HCT116 (cell line): ENCODE measurements at regions of chr11 and their contacts with region 1.

Region 1: GRCh38 chr11:123062158-123062891 is 389 bp upstream of the HSPA8 start:
- DNase-seq: peak; percentile 97
- ATAC-seq: peak; percentile 87
- H3K4me3 ChIP-seq: peak overlapping the region; percentile 62 to 97
- H3K27ac ChIP-seq: peak overlapping the region; percentile 98
- H3K4me1 ChIP-seq: peaks cover 18 to 28% of the 10 kb centered on the region in 2 experiments
- H3K27me3 ChIP-seq: no peaks in the 10 kb centered on the region
- CTCF ChIP-seq: no peak
- POLR2A ChIP-seq: no peak
- RAD21 ChIP-seq: no peak

Region 2: GRCh38 chr11:123080015-123080414 is 17.7 kb after region 1 on chr11:
- CTCF ChIA-PET with region 1: no interaction called
- POLR2A ChIA-PET with region 1: interaction called, 13 read pairs
- RAD21 ChIA-PET with region 1: no interaction called
- intact Hi-C with region 1: no loop called
- DNase-seq: no peak
- ATAC-seq: no peak
- H3K4me3 ChIP-seq: no peak overlapping the region
- H3K27ac ChIP-seq: no peak overlapping the region
- H3K4me1 ChIP-seq: peaks cover 7 to 12% of the 10 kb centered on the region in 2 experiments; a peak in 3 of 4 replicates
- H3K27me3 ChIP-seq: no peaks in the 10 kb centered on the region
- CTCF ChIP-seq: no peak
- POLR2A ChIP-seq: no peak
- RAD21 ChIP-seq: no peak

Region 3: DNA sequence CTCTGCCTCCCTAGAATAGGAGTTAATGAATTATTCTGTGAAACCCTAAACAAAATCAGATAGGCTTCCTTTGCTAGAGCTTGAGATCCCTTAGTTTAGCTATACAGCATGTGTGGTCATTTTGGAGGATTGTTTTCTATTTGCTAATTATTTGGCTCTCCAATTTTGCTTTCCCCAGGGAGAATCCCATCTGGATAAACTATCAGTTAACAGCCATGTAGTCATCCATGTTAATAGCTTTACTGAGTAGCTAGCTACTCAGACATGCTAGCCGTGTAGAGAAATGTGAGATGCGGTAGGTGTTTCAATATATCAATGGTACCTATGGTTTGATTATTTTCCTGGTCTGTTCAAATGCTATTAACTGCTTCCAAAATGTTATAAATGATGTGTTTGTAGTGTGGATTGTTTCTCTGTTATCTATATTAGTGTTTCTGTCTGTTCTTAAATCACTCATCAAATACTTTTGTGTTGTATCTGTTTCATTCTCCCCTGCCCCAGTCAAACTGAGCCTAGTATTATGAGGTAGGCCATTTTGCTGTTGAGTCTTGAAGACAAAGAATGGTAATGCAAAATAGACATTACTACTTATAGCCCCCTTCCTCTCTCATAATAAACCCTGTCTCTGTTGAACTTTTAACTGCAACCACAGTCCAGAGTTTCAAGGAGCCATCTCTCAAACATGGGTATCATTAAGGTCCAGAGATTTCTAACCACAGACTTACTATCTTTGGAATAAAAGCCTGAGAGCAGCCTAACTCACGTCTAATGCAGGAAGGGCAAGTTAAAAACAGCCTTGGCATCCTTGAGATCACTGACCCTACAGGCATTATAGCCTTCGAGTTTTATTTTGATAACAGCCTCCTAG is 311.7 kb after region 1 on chr11:
- CTCF ChIA-PET with region 1: no interaction called
- POLR2A ChIA-PET with region 1: no interaction called
- RAD21 ChIA-PET with region 1: no interaction called
- intact Hi-C with region 1: no loop called
- DNase-seq: no peak
- ATAC-seq: no peak
- H3K4me3 ChIP-seq: no peak overlapping the region
- H3K27ac ChIP-seq: no peak overlapping the region
- H3K4me1 ChIP-seq: no peaks in the 10 kb centered on the region
- H3K27me3 ChIP-seq: peaks cover 37% of the 10 kb centered on the region
- CTCF ChIP-seq: no peak
- POLR2A ChIP-seq: no peak
- RAD21 ChIP-seq: no peak